Posterior vena cava (tissue), 2 donors: ENCODE measurements at regions of chr4 and their contacts with region 1.

Region 1: GRCh38 chr4:47668810-47669408 is 169.0 kb downstream of the CORIN start:
- DNase-seq: no peak

Region 2: DNA sequence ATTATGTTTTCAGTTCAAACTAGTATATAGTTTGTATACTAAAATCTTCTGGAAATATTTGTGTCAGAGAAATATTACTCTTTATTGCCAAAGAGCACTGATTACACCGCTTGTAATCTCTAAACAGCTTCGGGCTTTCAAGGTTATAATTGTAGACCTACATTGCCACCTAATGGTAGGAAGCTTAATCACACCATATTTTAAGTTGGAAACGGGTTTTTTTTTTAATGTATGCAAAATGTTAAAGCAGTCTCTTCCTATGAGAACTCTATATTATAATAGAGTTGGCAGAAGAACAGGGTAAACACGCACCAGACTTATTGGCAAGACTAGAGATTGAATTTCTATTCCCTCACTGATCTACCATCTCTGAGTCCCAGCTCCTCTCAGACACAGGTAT is 264.9 kb after region 1 on chr4:
- intact Hi-C with region 1: loop called (anchors 5 to 10 kb)
- DNase-seq: no peak

Region 3: DNA sequence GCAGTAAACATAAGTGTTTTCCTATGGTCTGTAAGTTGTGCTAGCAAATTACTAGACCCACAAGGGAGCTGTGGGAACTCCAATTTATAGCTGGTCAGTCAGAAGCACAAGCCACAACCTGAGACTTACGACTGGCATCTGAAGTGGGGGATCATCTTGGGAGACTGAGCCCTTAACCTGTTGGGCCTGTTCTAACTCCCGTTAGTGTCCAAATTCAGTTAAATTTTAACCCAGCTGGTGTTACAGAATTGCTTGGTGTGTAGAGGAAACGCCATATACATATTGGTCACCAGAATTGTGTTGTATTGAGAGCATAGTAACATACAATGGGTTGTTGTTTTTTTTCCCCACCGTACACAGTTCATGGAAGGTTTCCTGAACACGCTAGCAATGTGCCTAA is 270.5 kb after region 1 on chr4:
- intact Hi-C with region 1: loop called (anchors 5 to 10 kb)
- DNase-seq: no peak

Region 4: GRCh38 chr4:48065587-48066052 is 396.7 kb after region 1 on chr4:
- intact Hi-C with region 1: no loop called
- DNase-seq: no peak